ENCODE measurements at regions of chr20 and their contacts with region 1.

Region 1: DNA sequence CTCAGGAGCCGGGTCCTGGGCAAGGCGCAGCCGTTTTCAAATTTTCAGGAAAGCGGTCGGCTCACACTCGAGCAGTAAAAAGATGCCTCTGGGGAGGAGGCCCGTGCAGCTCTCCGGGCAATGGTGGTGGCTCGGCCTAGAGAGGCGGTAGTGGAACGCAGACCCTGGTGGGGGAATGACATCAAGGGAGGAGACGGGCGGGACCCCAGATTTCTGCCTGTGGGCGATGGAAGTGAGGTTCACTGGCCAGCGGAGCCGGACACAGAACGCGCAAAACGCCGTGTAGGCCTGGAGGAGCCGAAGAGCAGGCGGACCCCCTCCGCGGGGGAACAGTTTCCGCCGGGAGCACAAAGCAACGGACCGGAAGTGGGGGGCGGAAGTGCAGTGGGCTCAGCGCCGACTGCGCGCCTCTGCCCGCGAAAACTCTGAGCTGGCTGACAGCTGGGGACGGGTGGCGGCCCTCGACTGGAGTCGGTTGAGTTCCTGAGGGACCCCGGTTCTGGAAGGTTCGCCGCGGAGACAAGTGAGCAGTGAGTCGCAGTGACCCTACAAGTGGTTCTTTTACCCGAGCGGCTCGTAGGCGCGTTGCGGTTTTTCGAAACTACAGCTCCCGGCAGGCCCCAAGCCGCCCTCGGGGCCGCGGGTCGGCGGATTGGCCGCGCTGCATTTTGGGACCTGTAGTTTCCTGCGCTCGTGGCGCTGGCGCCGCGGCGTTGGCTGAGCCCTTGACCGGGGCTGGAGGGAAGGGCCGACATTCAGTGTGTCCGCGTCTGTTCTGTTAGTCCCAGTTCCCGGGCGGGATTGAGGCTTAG is at the start of gene RTEL1:
- DNase-seq: peak; percentile 88
- H3K4me3 Mint-ChIP-seq: peak within 1 kb of the TSS; percentile 98
- H3K27ac Mint-ChIP-seq: peak within 1 kb of the TSS; percentile 93
- H3K4me1 Mint-ChIP-seq: peaks cover 38% of the 10 kb centered on the region
- H3K27me3 Mint-ChIP-seq: no peaks in the 10 kb centered on the region
- total RNA-seq, gene RTEL1: 33.6 to 34.8 TPM

Region 2: DNA sequence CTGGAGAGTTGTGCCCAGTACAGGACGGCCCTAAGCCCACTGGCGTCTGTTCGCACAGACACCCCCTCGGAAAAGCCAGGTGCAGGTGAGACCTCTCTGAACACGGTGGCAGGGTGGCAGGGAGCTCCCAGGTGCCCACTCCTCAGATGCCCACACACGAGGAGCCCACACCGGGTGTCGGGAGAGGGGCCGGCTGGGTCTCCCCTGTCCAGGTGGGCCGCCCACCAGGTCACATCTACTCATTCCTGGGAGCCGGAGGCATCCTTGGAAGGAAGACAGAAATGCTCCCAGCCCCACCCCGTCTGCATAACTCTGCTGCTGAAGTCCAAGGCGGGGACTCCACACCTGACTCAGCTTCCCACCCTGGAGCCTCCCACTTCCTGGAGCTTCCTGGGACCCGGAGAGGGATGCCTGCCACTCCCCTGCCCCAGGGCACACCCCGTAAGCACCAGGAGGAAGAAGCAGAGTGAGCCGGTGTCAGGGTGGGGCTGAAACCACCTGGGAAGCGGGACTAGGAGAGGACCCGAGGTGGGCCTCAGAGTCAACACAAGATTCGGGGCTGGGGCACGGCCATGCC is 113.1 kb before region 1 on chr20:
- CTCF ChIA-PET with region 1: no interaction called
- intact Hi-C with region 1: no loop called
- DNase-seq: no peak
- H3K4me3 Mint-ChIP-seq: no peak overlapping the region
- H3K27ac Mint-ChIP-seq: no peak overlapping the region
- H3K4me1 Mint-ChIP-seq: peaks cover 8% of the 10 kb centered on the region
- H3K27me3 Mint-ChIP-seq: no peaks in the 10 kb centered on the region

Region 3: GRCh38 chr20:63686492-63687321 is 28.6 kb after region 1 on chr20:
- CTCF ChIA-PET with region 1: no interaction called
- intact Hi-C with region 1: loop called (anchors 1 kb)
- DNase-seq: peak; percentile 88
- H3K4me3 Mint-ChIP-seq: no peak overlapping the region
- H3K27ac Mint-ChIP-seq: peak overlapping the region; percentile 76
- H3K4me1 Mint-ChIP-seq: peaks cover 24% of the 10 kb centered on the region
- H3K27me3 Mint-ChIP-seq: no peaks in the 10 kb centered on the region